Posterior vena cava (tissue), 2 donors: ENCODE measurements at regions of chr3 and their contacts with region 1.

Region 1: DNA sequence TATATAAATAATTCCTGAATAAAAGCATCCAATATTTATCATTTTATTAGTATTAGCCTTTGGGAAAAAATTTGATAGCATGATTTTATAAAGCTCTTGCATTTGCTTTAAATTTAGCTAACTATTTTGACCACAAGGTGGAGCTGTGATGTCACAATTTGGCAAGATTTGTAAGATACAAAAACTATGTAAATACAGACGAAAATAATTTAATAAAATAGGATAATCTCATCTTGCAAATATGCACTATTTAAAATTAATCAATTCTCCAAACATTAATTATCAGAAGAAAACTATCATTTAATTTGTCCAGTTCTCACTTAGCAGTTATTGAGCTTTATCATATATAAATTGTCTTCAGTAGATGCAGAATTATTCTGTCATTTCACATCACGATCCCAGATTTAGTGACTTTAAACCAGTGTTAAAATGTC is 95.4 kb downstream of the PLOD2 start:
- DNase-seq: no peak

Region 2: GRCh38 chr3:146052791-146053310 is 12.7 kb before region 1 on chr3:
- intact Hi-C with region 1: no loop called
- DNase-seq: no peak

Region 3: DNA sequence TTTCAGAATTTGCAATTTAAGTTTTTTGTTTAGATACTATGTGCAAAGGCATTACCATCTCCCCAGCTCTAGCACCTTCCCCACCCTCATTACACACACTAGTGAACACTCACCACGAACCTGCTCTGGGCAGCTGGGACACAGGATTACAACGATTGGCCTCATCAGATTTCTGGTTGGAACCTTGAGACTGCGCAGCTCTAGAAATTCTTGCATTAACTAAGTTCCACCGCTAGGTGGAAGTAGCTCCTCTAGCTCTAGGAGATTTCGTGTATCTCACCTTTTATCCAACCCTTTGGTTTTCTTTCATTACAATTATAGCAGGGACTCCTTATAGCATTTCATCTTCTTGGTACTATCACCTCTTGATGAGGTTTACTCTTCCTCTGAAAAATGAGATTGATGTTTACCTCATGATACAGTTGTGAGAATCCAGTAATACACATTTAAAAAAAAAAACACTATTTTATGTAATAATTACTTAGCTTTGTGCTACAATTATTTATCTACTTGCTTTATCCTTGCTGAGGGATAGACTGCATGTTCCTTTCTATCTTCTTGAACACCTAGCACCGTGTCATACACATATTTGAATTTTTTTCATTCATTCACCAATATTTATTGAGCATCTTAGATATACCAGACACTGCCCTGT is 124.1 kb after region 1 on chr3:
- intact Hi-C with region 1: loop called in 1 of 2 experiments (anchors 5 kb)
- DNase-seq: no peak